Ovary (tissue), 10 donors: ENCODE measurements at regions of chr15 and their contacts with region 1.

Region 1: GRCh38 chr15:87219650-87220615 is 1036.6 kb downstream of the NTRK3 start:
- DNase-seq: no peak
- H3K4me3 ChIP-seq: no peak overlapping the region
- H3K27ac ChIP-seq: no peak overlapping the region
- H3K4me1 ChIP-seq: no peaks in the 10 kb centered on the region
- H3K27me3 ChIP-seq: no peaks in the 10 kb centered on the region
- CTCF ChIP-seq: no peak
- EP300 ChIP-seq: no peak
- POLR2A ChIP-seq: no peak

Region 2: GRCh38 chr15:86300390-86301125 is 919.4 kb before region 1 on chr15:
- intact Hi-C with region 1: loop called in 1 of 4 experiments (anchors 10 kb)
- DNase-seq: no peak
- H3K4me3 ChIP-seq: no peak overlapping the region
- H3K27ac ChIP-seq: no peak overlapping the region
- H3K4me1 ChIP-seq: no peaks in the 10 kb centered on the region
- H3K27me3 ChIP-seq: no peaks in the 10 kb centered on the region
- CTCF ChIP-seq: no peak
- EP300 ChIP-seq: no peak
- POLR2A ChIP-seq: no peak

Region 3: GRCh38 chr15:87287011-87287489 is 67.1 kb after region 1 on chr15:
- intact Hi-C with region 1: loop called in 1 of 4 experiments (anchors 2 kb)
- DNase-seq: no peak
- H3K4me3 ChIP-seq: no peak overlapping the region
- H3K27ac ChIP-seq: no peak overlapping the region
- H3K4me1 ChIP-seq: no peaks in the 10 kb centered on the region
- H3K27me3 ChIP-seq: no peaks in the 10 kb centered on the region
- CTCF ChIP-seq: no peak
- EP300 ChIP-seq: no peak
- POLR2A ChIP-seq: no peak